Esophagus muscularis mucosa (tissue), 4 donors: ENCODE measurements at regions of chr20 and their contacts with region 1.

Region 1: GRCh38 chr20:10553326-10553984 is 118.3 kb downstream of the SLX4IP start:
- DNase-seq: peak; percentile 92
- H3K4me3 ChIP-seq: no peak overlapping the region
- H3K27ac ChIP-seq: no peak overlapping the region
- H3K4me1 ChIP-seq: peaks cover 0 to 8% (median 2%) of the 10 kb centered on the region in 4 donors
- H3K27me3 ChIP-seq: no peaks in the 10 kb centered on the region
- CTCF ChIP-seq: peak; percentile 65 to 71 (median 66)
- EP300 ChIP-seq: no peak
- POLR2A ChIP-seq: no peak

Region 2: DNA sequence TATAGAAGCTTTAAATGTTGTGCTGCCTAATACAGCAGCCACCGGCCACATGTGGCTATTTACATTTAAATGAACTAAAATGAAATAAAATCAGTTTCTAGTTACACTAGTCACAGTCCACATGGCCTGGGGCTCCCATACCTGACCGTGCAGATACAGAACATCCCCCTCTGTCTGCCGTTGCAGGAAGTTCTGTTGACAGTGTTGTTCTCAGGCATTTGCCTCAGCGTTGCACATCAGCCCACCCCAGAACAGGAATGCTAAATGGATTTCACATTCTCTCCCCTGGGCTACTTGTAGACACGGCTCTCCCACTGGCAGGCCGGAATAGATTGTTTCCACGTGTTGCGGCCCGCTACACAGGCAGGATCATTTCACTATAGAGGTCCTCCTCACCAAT is 94.0 kb after region 1 on chr20:
- intact Hi-C with region 1: loop called (anchors 10 kb)
- DNase-seq: no peak
- H3K4me3 ChIP-seq: no peak overlapping the region
- H3K27ac ChIP-seq: peak overlapping the region in 1 of 4 donors; percentile 19
- H3K4me1 ChIP-seq: peaks cover 10 to 34% (median 15%) of the 10 kb centered on the region in 4 donors
- H3K27me3 ChIP-seq: no peaks in the 10 kb centered on the region
- CTCF ChIP-seq: peak in 1 of 3 experiments; percentile 21
- EP300 ChIP-seq: no peak
- POLR2A ChIP-seq: no peak

Region 3: DNA sequence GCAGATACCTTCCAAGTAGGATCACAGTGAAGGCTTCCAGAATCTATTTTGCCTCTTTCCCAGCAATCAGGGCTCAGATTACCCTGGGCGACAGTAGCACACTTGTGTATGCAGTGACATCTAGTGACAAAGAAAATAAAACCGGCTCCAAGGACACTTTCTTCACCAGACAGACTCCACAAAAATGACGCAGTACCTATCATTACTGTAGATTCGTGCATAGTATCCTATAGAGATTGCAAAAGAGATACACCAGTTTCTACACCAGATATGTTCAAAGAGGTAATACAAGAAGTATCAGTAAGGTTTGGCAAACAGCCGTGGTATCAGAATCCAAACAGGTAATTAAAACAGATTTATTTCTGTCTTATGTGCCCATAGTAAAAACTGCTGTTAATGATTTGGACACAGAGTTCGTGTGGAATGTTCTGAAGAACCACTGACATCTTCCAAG is 720.7 kb after region 1 on chr20:
- intact Hi-C with region 1: loop called (anchors 5 kb)
- DNase-seq: no peak
- H3K4me3 ChIP-seq: no peak overlapping the region
- H3K27ac ChIP-seq: no peak overlapping the region
- H3K4me1 ChIP-seq: no peaks in the 10 kb centered on the region
- H3K27me3 ChIP-seq: no peaks in the 10 kb centered on the region
- CTCF ChIP-seq: peak; percentile 25 to 41 (median 28)
- EP300 ChIP-seq: no peak
- POLR2A ChIP-seq: no peak

Region 4: GRCh38 chr20:11544029-11544678 is 990.7 kb after region 1 on chr20:
- intact Hi-C with region 1: loop called (anchors 10 kb)
- DNase-seq: no peak
- H3K4me3 ChIP-seq: no peak overlapping the region
- H3K27ac ChIP-seq: no peak overlapping the region
- H3K4me1 ChIP-seq: peaks cover 0 to 3% (median 0%) of the 10 kb centered on the region in 4 donors
- H3K27me3 ChIP-seq: peaks cover 0 to 8% (median 0%) of the 10 kb centered on the region in 4 donors
- CTCF ChIP-seq: peak; percentile 41 to 46 (median 45)
- EP300 ChIP-seq: no peak
- POLR2A ChIP-seq: no peak